PC-3 (cell line): ENCODE measurements at regions of chr17 and their contacts with region 1.

Region 1: GRCh38 chr17:17972126-17972951 is at the starts of genes DRC3 and TOM1L2:
- DNase-seq: peak; percentile 100
- ATAC-seq: peak; percentile 90
- H3K4me3 ChIP-seq: peak within 1 kb of the TSS; percentile 80
- H3K27ac ChIP-seq: peak within 1 kb of the TSS; percentile 30
- H3K4me1 ChIP-seq: peaks cover 13% of the 10 kb centered on the region
- H3K27me3 ChIP-seq: no peaks in the 10 kb centered on the region
- CTCF ChIP-seq: no peak
- total RNA-seq, gene DRC3: 1.9 and 2.2 TPM in 2 replicates
- total RNA-seq, gene TOM1L2: 53.3 and 77.1 TPM in 2 replicates

Region 2: GRCh38 chr17:17890773-17891759 is 81.3 kb before region 1 on chr17:
- CTCF ChIA-PET with region 1: interaction called, 6 read pairs
- POLR2A ChIA-PET with region 1: no interaction called
- intact Hi-C with region 1: loop called (anchors 2 kb)
- DNase-seq: peak; percentile 73
- ATAC-seq: peak; percentile 99
- H3K4me3 ChIP-seq: no peak overlapping the region
- H3K27ac ChIP-seq: no peak overlapping the region
- H3K4me1 ChIP-seq: no peaks in the 10 kb centered on the region
- H3K27me3 ChIP-seq: no peaks in the 10 kb centered on the region
- CTCF ChIP-seq: peak; percentile 97

Region 3: GRCh38 chr17:17999364-18000029 is 27.2 kb after region 1 on chr17:
- CTCF ChIA-PET with region 1: interaction called, 10 read pairs
- POLR2A ChIA-PET with region 1: no interaction called
- intact Hi-C with region 1: no loop called
- DNase-seq: no peak
- ATAC-seq: no peak
- H3K4me3 ChIP-seq: no peak overlapping the region
- H3K27ac ChIP-seq: no peak overlapping the region
- H3K4me1 ChIP-seq: peaks cover 5% of the 10 kb centered on the region
- H3K27me3 ChIP-seq: no peaks in the 10 kb centered on the region
- CTCF ChIP-seq: no peak

Region 4: DNA sequence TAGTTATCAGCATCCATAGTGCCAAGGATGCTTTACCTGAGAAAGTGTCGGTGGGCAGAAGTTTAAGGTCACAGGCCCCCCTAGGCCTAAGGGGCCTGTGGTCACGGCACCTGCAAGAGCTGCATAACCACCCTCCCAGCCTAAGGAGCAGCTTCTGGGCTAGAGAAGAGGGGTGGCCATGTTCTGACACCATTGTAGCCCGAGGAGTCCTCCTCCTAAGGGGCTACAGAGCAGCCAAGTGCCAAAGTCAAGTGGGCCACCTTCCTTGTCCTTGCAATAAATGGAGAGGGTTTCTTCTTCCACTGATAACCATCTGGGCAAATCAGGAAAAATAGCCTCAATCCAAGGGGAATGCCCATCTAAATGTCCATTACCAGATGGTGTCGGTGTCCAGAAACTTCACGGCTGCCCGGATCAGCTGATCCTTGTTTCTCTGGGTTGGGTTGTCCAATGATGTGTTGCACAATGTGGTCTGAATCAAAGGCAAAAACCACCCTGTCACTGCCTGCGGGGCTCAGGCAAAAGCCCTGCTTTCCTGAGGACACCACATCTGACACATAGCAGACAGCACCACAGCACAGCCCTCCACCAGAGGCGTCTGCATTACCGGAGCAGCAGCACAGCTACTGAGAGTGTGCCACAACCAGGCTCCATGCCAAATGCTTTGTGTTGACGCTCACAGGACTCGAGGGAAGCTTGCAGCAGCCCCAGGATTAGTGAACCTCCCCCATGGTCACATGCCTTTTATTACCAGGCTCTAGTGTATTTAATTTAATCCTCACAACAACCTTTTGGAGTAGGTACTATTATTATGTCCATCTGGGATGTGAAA is 53.8 kb after region 1 on chr17:
- CTCF ChIA-PET with region 1: no interaction called
- POLR2A ChIA-PET with region 1: no interaction called
- intact Hi-C with region 1: no loop called
- DNase-seq: peak; percentile 14
- ATAC-seq: no peak
- H3K4me3 ChIP-seq: no peak overlapping the region
- H3K27ac ChIP-seq: peak overlapping the region; percentile 11
- H3K4me1 ChIP-seq: peaks cover 14% of the 10 kb centered on the region
- H3K27me3 ChIP-seq: no peaks in the 10 kb centered on the region
- CTCF ChIP-seq: no peak